Common myeloid progenitor, CD34-positive (primary cell): ENCODE measurements at regions of chr1 and their contacts with region 1.

Region 1: GRCh38 chr1:159924981-159925712 is at the start of gene TAGLN2:
- DNase-seq: peak; percentile 85 to 93 (median 91)
- H3K4me3 ChIP-seq: peak within 1 kb of the TSS; percentile 85 to 100 (median 94)
- H3K27ac ChIP-seq: peak within 1 kb of the TSS; percentile 100
- H3K4me1 ChIP-seq: peaks cover 7 to 53% (median 49%) of the 10 kb centered on the region in 4 experiments
- H3K27me3 ChIP-seq: no peaks in the 10 kb centered on the region

Region 2: GRCh38 chr1:159867683-159868064 is 57.5 kb before region 1 on chr1:
- CTCF ChIA-PET with region 1: no interaction called
- POLR2A ChIA-PET with region 1: no interaction called
- DNase-seq: no peak
- H3K4me3 ChIP-seq: no peak overlapping the region
- H3K27ac ChIP-seq: no peak overlapping the region
- H3K4me1 ChIP-seq: peaks cover 0 to 16% (median 8%) of the 10 kb centered on the region in 4 experiments
- H3K27me3 ChIP-seq: no peaks in the 10 kb centered on the region

Region 3: GRCh38 chr1:159900086-159900680 is 25.0 kb before region 1 on chr1 and contains the start of gene CFAP45:
- CTCF ChIA-PET with region 1: interaction called, 250 read pairs
- POLR2A ChIA-PET with region 1: interaction called, 27 read pairs
- DNase-seq: peak; percentile 78 to 90 (median 90)
- H3K4me3 ChIP-seq: peak within 1 kb of the TSS in 1 of 7 experiments; percentile 1
- H3K27ac ChIP-seq: peak within 1 kb of the TSS; percentile 59 to 62
- H3K4me1 ChIP-seq: peaks cover 18 to 42% (median 37%) of the 10 kb centered on the region in 4 experiments
- H3K27me3 ChIP-seq: no peaks in the 10 kb centered on the region

Region 4: GRCh38 chr1:159953536-159954515 is 28.7 kb after region 1 on chr1 and contains the start of gene SLAMF9:
- CTCF ChIA-PET with region 1: no interaction called
- POLR2A ChIA-PET with region 1: no interaction called
- DNase-seq: peak in 2 of 3 donors; percentile 17 to 44
- H3K4me3 ChIP-seq: no peak within 1 kb of the TSS
- H3K27ac ChIP-seq: no peak within 1 kb of the TSS
- H3K4me1 ChIP-seq: no peaks in the 10 kb centered on the region
- H3K27me3 ChIP-seq: peaks cover 0 to 7% (median 0%) of the 10 kb centered on the region in 5 experiments